ENCODE measurements at regions of chr2 and their contacts with region 1.

Region 1: DNA sequence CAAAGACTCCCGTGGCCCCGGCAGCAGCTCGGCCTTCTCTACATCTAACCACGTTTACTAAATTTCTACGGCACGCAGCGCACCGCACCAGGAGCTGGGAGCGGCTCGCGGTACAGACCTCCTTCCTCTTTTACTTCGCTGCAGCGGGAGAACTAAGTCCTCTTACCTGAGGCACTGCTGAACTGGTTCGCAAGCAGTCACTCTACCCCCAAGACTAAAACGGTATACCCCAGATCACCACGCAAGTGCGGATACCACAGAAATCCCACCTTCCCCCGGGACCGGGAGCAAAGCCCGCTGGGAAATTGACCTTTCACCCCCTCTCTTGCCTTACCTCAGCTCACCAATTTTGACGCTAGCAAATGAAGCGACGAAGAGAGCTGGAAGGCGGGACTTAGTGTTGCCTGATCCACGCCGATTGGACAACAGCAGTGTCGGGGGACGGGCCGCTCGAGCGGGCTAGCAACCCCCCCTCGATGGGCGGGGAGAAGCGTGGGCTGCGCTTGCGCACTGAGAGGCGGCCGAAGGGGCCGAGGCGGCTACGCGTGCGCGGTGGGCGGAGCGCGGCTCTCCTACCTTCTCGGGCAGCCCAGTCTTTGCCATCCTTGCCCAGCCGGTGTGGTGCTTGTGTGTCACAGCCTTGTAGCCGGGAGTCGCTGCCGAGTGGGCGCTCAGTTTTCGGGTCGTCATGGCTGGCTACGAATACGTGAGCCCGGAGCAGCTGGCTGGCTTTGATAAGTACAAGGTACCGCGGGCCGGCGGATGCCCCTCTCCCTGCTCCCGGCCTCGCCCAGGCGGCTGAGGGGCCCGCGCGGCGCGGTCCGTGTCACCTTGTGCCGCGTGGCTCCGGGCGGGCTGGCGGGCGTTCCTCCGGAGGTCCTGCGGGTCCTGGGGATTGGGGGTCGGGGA is at the start of gene SELENOI:
- DNase-seq: peak; percentile 99
- ATAC-seq: peak; percentile 99
- H3K4me3 ChIP-seq: peak within 1 kb of the TSS; percentile 77
- H3K27ac ChIP-seq: peak within 1 kb of the TSS; percentile 87
- H3K4me1 ChIP-seq: no peaks in the 10 kb centered on the region
- H3K27me3 ChIP-seq: no peaks in the 10 kb centered on the region
- CTCF ChIP-seq: no peak
- POLR2A ChIP-seq: peak; percentile 84
- RAD21 ChIP-seq: no peak
- total RNA-seq, gene SELENOI: 25.0 and 25.1 TPM in 2 replicates

Region 2: GRCh38 chr2:25976983-25977741 is 368.6 kb before region 1 on chr2:
- CTCF ChIA-PET with region 1: no interaction called
- POLR2A ChIA-PET with region 1: no interaction called
- dilution Hi-C with region 1: no loop called
- in situ Hi-C with region 1: loop called (anchors 25 kb)
- intact Hi-C with region 1: loop called (anchors 10 kb)
- DNase-seq: no peak
- ATAC-seq: peak; percentile 9; the same call in 1 of the 2 replicates
- H3K4me3 ChIP-seq: no peak overlapping the region
- H3K27ac ChIP-seq: no peak overlapping the region
- H3K4me1 ChIP-seq: peaks cover 32% of the 10 kb centered on the region
- H3K27me3 ChIP-seq: no peaks in the 10 kb centered on the region
- CTCF ChIP-seq: no peak
- POLR2A ChIP-seq: no peak
- RAD21 ChIP-seq: no peak

Region 3: GRCh38 chr2:26139269-26140183 is 206.3 kb before region 1 on chr2:
- CTCF ChIA-PET with region 1: no interaction called
- POLR2A ChIA-PET with region 1: no interaction called
- dilution Hi-C with region 1: no loop called
- in situ Hi-C with region 1: no loop called
- intact Hi-C with region 1: no loop called
- DNase-seq: no peak
- ATAC-seq: no peak
- H3K4me3 ChIP-seq: no peak overlapping the region
- H3K27ac ChIP-seq: no peak overlapping the region
- H3K4me1 ChIP-seq: no peaks in the 10 kb centered on the region
- H3K27me3 ChIP-seq: no peaks in the 10 kb centered on the region
- CTCF ChIP-seq: no peak
- POLR2A ChIP-seq: no peak
- RAD21 ChIP-seq: no peak

Region 4: GRCh38 chr2:26244309-26245121 is 101.3 kb before region 1 on chr2 and contains the starts of genes HADHA and HADHB:
- CTCF ChIA-PET with region 1: no interaction called
- POLR2A ChIA-PET with region 1: no interaction called
- dilution Hi-C with region 1: no loop called
- in situ Hi-C with region 1: no loop called
- intact Hi-C with region 1: loop called (anchors 5 kb)
- DNase-seq: peak; percentile 87
- ATAC-seq: peak; percentile 94
- H3K4me3 ChIP-seq: peak within 1 kb of the TSS; percentile 91
- H3K27ac ChIP-seq: peak within 1 kb of the TSS; percentile 91
- H3K4me1 ChIP-seq: peaks cover 6% of the 10 kb centered on the region
- H3K27me3 ChIP-seq: no peaks in the 10 kb centered on the region
- CTCF ChIP-seq: 0 out of 2 replicates have a peak, but pooled peaks have one; percentile 21
- POLR2A ChIP-seq: peak; percentile 87
- RAD21 ChIP-seq: no peak
- total RNA-seq, gene HADHA: 111 TPM in 2 replicates
- total RNA-seq, gene HADHB: 79.8 and 80.5 TPM in 2 replicates

Region 5: DNA sequence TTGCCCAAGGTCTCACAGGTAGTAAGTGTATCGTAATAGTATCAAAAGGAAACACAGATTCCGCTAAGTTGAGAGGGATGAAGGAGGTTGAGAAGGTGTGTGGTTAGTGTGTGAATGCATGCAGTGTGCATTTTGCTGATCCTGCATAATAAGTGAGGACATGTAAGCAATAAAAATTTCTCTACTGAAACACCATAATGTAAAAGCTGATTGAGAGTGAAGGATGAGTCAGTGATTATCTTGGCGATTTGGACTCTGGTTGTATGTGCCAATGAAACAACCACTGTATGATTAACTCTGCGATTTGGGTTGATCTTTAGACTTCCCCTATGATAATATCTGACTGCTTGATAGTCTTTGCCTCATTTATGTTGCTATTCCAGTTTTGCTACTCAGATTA is 17.5 kb after region 1 on chr2:
- CTCF ChIA-PET with region 1: no interaction called
- POLR2A ChIA-PET with region 1: interaction called, 18 read pairs
- dilution Hi-C with region 1: no loop called
- in situ Hi-C with region 1: no loop called
- intact Hi-C with region 1: no loop called
- DNase-seq: peak; percentile 31
- ATAC-seq: 0 out of 2 replicates have a peak, but pooled peaks have one; percentile 29
- H3K4me3 ChIP-seq: no peak overlapping the region
- H3K27ac ChIP-seq: no peak overlapping the region
- H3K4me1 ChIP-seq: no peaks in the 10 kb centered on the region
- H3K27me3 ChIP-seq: no peaks in the 10 kb centered on the region
- CTCF ChIP-seq: no peak
- POLR2A ChIP-seq: no peak
- RAD21 ChIP-seq: no peak

Region 6: DNA sequence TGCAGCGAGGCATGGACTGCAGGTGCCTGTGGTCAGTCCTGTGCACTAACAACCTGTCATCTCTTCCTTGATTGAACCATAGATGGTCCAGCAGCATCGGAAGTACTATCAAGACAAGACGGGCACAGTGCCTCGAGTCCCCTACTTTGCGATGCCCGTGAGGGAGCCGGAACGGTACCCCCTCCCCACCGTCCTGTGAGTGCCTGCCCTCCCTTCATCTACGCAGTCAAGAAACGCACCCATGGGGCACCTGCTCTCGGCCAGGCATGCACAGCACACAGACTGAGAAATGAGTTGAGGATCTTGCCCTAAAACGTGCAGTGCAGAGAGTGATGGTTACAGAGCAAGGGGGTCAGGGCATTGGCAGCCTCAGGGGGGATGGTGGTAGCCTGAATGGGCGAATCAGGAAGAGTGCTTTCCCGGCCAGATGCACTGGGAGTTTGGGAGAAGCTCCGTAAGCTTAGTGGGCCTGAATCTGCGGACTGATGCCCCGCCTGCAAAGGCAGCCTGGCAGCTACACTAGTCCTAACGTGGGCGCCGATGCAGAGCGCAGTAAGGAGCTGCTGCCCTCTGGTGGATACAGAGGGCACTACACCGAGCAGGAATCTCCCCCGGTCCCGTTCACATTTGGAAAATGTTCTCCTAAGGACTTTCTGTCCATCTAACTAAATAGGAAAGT is 231.8 kb after region 1 on chr2:
- CTCF ChIA-PET with region 1: no interaction called
- POLR2A ChIA-PET with region 1: no interaction called
- dilution Hi-C with region 1: no loop called
- in situ Hi-C with region 1: no loop called
- intact Hi-C with region 1: loop called (anchors 5 kb)
- DNase-seq: peak; percentile 49
- ATAC-seq: peak; percentile 99
- H3K4me3 ChIP-seq: no peak overlapping the region
- H3K27ac ChIP-seq: no peak overlapping the region
- H3K4me1 ChIP-seq: no peaks in the 10 kb centered on the region
- H3K27me3 ChIP-seq: peaks cover 69% of the 10 kb centered on the region
- CTCF ChIP-seq: peak; percentile 91
- POLR2A ChIP-seq: no peak
- RAD21 ChIP-seq: peak; percentile 85

Region 7: DNA sequence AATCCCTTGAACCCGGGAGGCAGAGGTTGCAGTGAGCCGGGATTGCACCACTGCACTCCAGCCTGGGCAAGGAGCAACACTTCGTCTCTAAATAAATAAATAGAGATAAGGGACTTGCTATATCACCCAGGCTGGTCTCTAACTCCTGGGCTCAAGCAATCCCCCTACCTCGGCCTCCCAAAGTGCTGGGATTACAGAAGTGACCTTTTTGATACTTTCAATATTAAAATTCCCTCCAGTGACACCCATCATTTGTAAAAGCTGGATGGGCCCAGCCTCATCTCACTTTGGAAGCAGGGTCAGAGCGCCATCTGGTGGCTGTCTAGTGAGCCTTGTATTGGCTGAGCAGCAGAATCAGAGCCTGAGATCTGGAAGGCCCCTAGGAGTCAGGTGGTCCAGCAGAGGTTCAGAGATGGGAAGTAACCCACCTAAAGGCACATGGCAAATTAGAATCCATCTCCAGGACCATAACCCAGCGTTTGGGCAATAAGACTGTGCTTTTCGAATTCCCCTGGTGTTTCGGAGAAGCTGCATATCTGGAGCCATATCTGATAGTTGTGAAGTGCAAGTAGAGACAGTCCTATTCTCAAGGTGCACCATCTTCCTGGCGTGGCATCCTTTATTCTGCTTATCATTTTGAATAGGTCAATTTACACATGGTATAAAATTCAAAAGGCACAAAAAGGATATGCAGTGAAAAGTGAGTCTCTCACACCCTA is 400.0 kb after region 1 on chr2:
- CTCF ChIA-PET with region 1: interaction called, 3 read pairs
- POLR2A ChIA-PET with region 1: no interaction called
- dilution Hi-C with region 1: no loop called
- in situ Hi-C with region 1: no loop called
- intact Hi-C with region 1: loop called (anchors 10 kb)
- DNase-seq: peak; percentile 78
- ATAC-seq: peak; percentile 90
- H3K4me3 ChIP-seq: no peak overlapping the region
- H3K27ac ChIP-seq: no peak overlapping the region
- H3K4me1 ChIP-seq: peaks cover 2% of the 10 kb centered on the region
- H3K27me3 ChIP-seq: peaks cover 5% of the 10 kb centered on the region; the same call in 1 of the 2 replicates
- CTCF ChIP-seq: peak; percentile 96
- POLR2A ChIP-seq: no peak
- RAD21 ChIP-seq: peak; percentile 95

Region 8: DNA sequence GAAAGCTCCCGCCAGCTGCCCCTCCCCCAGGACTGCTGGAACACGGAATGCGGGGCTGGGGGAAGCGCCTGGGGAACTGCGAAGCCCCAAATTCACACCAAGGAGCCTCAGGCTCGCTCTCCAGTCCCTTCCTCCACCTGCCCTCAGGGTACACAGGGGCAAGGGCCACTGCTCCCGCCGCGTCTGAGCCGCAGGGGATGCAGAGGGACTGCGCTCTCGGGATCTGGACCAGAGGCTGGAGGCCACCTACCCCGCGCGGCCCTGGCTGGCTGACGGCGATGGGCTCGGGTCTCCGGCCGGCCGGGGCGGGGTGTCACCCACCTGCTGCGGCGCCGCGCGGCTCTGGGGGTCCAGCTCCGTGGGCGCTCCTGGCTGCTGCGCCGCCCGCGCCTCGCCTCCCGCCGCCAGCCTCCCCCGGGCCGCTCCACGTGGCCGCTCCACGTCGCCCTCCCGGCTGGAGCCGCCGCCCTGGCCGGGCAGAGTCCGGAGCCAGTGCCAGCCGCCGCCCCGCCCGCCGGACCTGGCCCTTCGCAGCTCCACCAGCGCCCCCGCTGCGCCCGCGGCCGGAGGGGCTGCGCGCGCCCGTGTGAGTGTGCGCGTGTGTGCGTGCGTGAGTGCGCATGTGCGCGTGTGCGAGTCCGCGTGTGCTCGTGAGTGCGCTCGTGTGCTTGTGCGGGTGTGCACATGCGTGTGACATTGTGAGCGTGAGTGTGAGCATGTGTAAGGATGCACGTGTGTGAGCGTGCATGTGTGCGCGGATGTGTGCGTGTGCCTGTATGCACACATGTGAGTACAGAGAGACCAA is 772.9 kb after region 1 on chr2 and contains the start of gene CGREF1:
- CTCF ChIA-PET with region 1: no interaction called
- POLR2A ChIA-PET with region 1: no interaction called
- dilution Hi-C with region 1: no loop called
- in situ Hi-C with region 1: no loop called
- intact Hi-C with region 1: no loop called
- DNase-seq: no peak
- ATAC-seq: peak; percentile 36
- H3K4me3 ChIP-seq: peak within 1 kb of the TSS; percentile 42
- H3K27ac ChIP-seq: no peak within 1 kb of the TSS
- H3K4me1 ChIP-seq: peaks cover 5% of the 10 kb centered on the region
- H3K27me3 ChIP-seq: peaks cover 67% of the 10 kb centered on the region
- CTCF ChIP-seq: no peak
- POLR2A ChIP-seq: no peak
- RAD21 ChIP-seq: no peak
- total RNA-seq, gene CGREF1: 0.28 and 0.54 TPM in 2 replicates

Measured in IMR-90 (cell line).